Activated CD4-positive, alpha-beta memory T cell treated with anti-CD3 and anti-CD28 coated beads, Interleukin-2, amount 10 ng/mL, durations not matched to agents 7 days and 5 days (primary cell): ENCODE measurements at regions of chr9 and their contacts with region 1.

Region 1: DNA sequence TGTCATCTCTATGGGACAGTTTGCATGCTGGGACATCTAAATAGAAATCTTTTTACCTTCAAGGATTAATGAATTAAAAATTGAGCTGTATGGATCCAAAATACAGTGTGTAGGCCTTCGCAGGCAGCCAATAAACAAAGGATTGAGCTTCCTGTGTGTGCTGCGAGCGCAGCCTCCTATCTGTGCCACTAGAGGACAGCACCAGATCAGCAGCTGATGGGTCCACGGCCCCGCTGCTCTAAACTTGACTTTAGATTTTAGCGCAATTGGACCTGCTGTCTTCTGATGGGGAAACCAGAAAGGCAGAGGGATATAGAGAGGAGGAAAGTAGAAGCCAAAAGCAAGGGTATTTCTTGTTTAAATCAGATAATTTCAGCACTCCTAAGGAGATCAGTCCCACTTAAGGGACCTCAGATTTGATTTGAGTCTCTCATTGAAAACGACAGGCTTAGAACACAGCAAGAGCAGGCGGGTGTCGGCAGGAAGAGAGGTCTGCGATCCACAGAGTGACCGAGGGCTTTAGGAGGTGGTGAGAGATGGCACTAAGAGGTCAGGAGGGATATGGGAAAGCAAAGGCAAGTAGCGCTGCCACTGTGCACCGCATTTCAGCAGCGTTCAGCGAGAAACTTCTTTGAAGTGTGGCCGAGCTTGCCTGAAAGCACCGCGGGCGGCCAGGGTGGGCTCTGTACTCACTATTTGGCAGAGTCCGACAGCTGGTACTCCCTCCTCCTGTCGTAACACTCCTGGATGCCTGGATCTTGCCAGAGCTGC is 214.3 kb downstream of the GNA14 start:
- DNase-seq: peak; percentile 56
- H3K4me3 Mint-ChIP-seq: no peak overlapping the region
- H3K27ac Mint-ChIP-seq: no peak overlapping the region
- H3K4me1 Mint-ChIP-seq: peaks cover 3% of the 10 kb centered on the region
- H3K27me3 Mint-ChIP-seq: peaks cover 1% of the 10 kb centered on the region

Region 2: DNA sequence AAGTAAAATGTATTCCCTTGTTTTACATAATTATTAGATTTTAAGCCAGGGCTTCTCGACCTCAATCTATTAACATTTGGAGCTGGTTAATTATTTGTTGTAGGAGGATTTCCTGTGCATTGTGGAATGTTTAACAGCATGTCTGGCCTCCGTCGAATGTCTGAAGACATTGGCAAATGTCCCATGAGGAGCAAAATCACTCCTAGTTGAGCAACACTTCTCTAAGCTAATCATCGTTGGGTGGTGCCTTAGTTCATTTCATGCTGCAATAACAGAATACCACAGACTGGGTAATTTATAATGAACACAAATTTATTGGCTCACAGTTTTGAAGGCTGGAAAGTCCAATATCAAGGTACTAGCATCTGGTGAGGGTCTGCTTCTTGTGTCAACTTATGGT is 270.0 kb before region 1 on chr9:
- CTCF ChIA-PET with region 1: interaction called, 11 read pairs
- POLR2A ChIA-PET with region 1: no interaction called
- DNase-seq: no peak
- H3K4me3 Mint-ChIP-seq: no peak overlapping the region
- H3K27ac Mint-ChIP-seq: no peak overlapping the region
- H3K4me1 Mint-ChIP-seq: peaks cover 1% of the 10 kb centered on the region
- H3K27me3 Mint-ChIP-seq: peaks cover 15% of the 10 kb centered on the region

Region 3: DNA sequence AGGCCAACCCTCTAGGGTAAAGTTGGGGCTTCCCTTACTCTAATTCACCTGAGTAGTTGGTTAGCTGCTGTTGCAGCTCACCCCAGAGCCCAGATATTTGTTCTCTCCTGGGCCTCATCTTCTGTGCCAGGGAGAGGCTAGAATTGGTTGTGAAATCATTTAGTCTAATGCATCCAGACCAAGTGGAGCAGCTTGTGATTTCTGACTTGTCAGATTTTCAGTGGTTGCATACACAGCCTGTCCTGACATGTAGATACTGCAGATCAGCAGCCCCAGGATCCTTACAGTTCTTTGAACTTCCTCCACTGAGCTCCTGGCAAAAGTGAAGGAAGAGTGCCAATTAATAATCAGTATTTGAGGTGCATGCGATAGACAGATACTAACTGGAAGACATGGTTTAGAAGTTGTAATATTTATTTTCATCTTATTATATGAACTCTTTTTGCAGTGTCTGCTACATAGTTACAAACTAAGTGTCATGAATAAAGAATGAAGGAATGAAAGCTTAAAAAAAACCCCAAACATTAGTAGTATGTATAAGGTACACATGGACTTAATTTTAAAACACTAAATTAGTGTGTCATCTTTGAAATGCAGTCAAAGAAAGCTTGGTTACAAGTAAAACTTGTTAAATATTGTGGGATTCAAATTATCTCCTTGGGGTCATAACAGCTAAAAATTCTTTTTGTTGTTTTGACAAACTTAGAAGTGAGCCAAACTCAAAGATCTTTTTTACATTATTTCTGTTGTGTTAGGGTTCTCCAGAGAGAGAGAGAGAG is 128.0 kb before region 1 on chr9:
- CTCF ChIA-PET with region 1: no interaction called
- POLR2A ChIA-PET with region 1: no interaction called
- DNase-seq: no peak
- H3K4me3 Mint-ChIP-seq: no peak overlapping the region
- H3K27ac Mint-ChIP-seq: no peak overlapping the region
- H3K4me1 Mint-ChIP-seq: peaks cover 3% of the 10 kb centered on the region
- H3K27me3 Mint-ChIP-seq: no peaks in the 10 kb centered on the region

Region 4: GRCh38 chr9:77417566-77417965 is 16.3 kb before region 1 on chr9:
- CTCF ChIA-PET with region 1: interaction called, 12 read pairs
- POLR2A ChIA-PET with region 1: no interaction called
- DNase-seq: no peak
- H3K4me3 Mint-ChIP-seq: no peak overlapping the region
- H3K27ac Mint-ChIP-seq: no peak overlapping the region
- H3K4me1 Mint-ChIP-seq: no peaks in the 10 kb centered on the region
- H3K27me3 Mint-ChIP-seq: no peaks in the 10 kb centered on the region

Region 5: GRCh38 chr9:77488439-77489126 is 54.7 kb after region 1 on chr9:
- CTCF ChIA-PET with region 1: interaction called, 26 read pairs
- POLR2A ChIA-PET with region 1: interaction called, 3 read pairs
- DNase-seq: no peak
- H3K4me3 Mint-ChIP-seq: peak overlapping the region; percentile 74
- H3K27ac Mint-ChIP-seq: no peak overlapping the region
- H3K4me1 Mint-ChIP-seq: peaks cover 34% of the 10 kb centered on the region
- H3K27me3 Mint-ChIP-seq: peaks cover 6% of the 10 kb centered on the region

Region 6: DNA sequence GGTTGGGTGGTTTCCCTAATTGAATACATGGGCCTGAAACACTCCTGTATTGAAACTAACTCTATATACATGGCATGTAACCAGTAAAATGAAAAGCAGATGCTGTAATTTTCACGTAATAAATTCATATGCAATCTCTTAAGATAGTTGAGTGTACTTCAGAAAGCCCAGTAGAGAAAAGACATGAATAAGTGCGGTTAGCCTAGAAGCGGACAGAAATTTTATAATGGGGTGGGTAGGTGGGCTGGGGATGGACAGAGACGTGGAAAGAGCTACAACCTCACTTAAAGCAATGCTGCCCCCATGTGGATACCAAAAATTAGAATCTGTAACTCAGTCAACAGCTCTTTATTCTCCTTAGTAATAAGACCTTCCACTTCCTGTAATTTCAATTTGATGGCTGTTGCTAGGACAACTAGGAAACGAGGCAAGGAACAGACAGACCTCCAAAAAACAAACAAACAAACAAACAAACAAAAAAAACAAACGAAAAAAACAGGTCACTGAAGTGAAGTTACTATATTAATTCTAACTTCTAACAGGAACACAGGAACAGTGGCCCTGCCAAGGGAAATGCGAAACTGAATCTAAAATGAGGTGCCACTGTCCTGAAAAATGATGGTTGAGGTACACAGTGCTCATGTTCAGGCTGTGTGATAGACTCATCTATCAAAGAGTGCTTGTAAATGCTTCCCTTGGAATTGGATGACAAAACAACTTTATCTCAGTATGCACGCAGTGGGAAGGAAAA is 317.7 kb after region 1 on chr9:
- CTCF ChIA-PET with region 1: interaction called, 11 read pairs
- POLR2A ChIA-PET with region 1: no interaction called
- DNase-seq: no peak
- H3K4me3 Mint-ChIP-seq: no peak overlapping the region
- H3K27ac Mint-ChIP-seq: no peak overlapping the region
- H3K4me1 Mint-ChIP-seq: peaks cover 8% of the 10 kb centered on the region
- H3K27me3 Mint-ChIP-seq: no peaks in the 10 kb centered on the region

Region 7: GRCh38 chr9:77820293-77820954 is 386.6 kb after region 1 on chr9:
- CTCF ChIA-PET with region 1: no interaction called
- POLR2A ChIA-PET with region 1: no interaction called
- DNase-seq: no peak
- H3K4me3 Mint-ChIP-seq: no peak overlapping the region
- H3K27ac Mint-ChIP-seq: no peak overlapping the region
- H3K4me1 Mint-ChIP-seq: peaks cover 28% of the 10 kb centered on the region
- H3K27me3 Mint-ChIP-seq: no peaks in the 10 kb centered on the region